HepG2 (cell line): ENCODE measurements at regions of chr12 and their contacts with region 1.

Region 1: DNA sequence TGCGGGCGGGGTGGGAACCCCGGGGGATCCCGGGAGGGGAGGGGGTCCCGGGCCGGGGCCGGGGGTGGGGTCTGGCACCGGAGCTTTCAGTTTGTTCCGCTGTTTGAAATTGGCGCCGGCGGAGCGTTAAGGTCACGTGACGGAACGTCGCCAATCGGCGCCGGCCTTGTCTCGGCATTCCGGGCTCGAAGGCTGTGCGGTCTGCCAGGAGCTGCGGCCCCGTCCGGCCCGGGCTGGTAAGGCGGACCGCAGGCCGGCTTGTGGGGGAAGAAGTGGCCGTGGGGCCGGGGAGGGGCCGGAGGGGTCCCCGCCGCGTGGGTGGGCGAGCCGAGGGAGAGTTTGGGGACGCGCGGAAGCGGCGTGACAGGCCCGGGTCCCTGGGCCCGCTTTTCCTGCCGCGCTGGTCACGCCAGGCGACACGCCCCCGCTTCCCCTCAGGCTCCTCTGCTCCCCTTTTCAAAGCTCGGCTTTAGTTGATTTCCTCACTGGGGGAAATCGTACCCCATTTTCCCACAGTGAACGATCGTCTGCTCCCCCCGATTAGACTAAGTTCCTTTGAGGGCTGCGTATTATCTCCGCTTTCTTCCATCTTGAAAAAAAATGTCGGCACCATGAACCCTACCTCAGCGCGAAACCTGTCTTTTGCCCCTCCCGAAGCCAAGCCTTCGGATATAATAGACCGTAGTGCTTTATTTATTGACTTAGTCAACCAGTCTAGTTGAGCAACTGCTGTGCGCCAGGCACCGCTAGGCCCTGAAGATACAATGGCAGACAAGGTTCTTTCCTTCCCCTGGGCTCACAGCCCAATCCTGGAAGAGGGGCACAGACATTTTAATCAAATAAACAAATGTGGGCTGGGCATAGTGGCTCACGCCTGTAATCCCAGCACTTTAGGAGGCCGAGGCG is at the starts of genes FOXM1 and RHNO1:
- DNase-seq: peak; percentile 78
- ATAC-seq: peak; percentile 93
- H3K4me3 ChIP-seq: peak within 1 kb of the TSS; percentile 74 to 85 (median 77)
- H3K27ac ChIP-seq: peak within 1 kb of the TSS; percentile 84
- H3K4me1 ChIP-seq: peaks cover 38% of the 10 kb centered on the region
- H3K27me3 ChIP-seq: no peaks in the 10 kb centered on the region; a peak in 1 of 5 replicates
- CTCF ChIP-seq: no peak
- EP300 ChIP-seq: no peak
- POLR2A ChIP-seq: peak; percentile 61 to 81; a peak in 3 of 4 replicates
- RAD21 ChIP-seq: peak; percentile 40; the same call in 1 of the 2 replicates
- total RNA-seq, gene FOXM1: 25.9 and 28.6 TPM in 2 replicates
- total RNA-seq, gene RHNO1: 27.2 and 30.4 TPM in 2 replicates

Region 2: DNA sequence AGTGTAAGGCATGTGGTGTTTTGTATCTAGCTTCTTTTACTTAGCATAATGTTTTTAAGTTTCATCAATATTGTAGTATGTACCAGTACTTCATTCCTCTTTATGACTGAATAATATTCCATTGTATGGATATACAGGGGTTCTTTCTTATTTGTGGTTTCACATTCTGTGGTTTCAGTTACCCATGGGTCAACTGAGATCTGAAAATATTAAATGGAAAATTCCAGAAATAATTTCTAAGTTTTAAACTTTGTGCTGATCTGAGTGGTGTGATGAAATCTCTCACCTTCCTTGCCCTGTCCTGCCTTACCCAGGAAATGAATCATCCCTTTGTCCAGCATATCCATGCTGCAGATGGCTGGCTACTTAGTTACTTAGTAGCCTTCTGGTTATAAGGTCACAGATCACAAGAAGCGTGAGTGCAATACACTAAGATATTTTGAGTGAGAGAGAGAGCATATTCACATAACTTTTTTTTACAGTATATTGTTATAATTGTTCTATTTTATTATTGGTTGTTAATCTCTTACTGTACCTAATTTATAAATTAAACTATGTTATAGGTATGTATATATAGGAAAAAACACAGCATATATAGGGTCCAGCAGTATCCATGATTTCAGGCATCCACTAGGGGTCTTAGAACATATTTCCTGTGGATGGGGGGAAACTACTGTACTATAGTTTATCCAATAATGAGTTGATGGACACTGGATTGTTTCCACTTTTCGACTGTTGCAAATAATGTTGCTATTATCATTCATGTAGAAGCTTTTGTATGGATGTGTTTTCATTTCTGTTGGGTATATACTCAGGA is 1116.5 kb before region 1 on chr12:
- CTCF ChIA-PET with region 1: no interaction called
- POLR2A ChIA-PET with region 1: no interaction called
- in situ Hi-C with region 1: no loop called
- intact Hi-C with region 1: no loop called
- DNase-seq: peak; percentile 95
- ATAC-seq: peak; percentile 99
- H3K4me3 ChIP-seq: peak overlapping the region in 1 of 3 experiments; percentile 7; a peak in 1 of 6 replicates
- H3K27ac ChIP-seq: peak overlapping the region; percentile 83
- H3K4me1 ChIP-seq: peaks cover 82% of the 10 kb centered on the region
- H3K27me3 ChIP-seq: no peaks in the 10 kb centered on the region
- CTCF ChIP-seq: no peak
- EP300 ChIP-seq: peak in 1 of 2 experiments; percentile 96; a peak in 2 of 4 replicates
- POLR2A ChIP-seq: no peak
- RAD21 ChIP-seq: no peak

Region 3: DNA sequence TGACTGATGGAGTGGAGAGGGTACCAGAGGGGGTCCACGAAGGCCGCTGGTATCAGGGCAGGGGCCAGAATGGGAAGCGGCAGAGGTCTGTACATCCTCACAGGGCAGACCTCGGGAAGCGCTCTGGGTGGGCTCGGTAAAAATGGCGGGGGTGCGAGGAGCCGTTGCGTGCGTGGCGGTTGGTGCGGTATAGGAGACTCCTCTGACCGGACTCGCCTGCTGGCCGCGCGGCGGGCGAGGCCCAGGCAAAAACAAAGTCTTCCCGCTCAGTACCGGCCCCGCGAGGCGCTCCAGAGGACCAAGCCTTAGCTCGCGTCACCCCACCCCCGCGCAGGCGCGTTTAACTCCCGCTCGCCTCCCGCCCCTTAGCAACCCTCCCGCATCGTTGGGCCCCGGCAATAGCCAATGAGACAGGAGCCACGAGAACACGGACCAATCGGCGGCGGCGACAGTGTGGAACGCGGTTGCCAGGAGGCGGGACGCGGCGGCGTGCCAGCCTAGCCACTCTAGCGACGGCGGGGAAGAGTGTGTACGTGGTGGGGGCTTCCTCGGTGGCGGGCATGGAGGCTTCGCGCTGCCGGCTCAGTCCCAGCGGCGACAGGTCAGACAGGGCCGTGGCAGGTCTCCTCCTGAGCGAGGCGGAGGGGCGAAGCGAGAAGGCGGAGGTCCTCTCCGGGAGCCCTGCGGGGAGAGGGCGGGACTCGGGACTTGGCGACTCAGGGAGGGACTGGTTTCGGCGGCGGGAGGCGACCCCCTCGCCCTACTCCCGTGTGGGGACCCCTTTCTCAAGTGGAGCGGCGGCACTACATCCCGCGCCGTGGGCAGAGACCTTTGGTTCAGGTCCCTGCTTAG is 13.3 kb after region 1 on chr12 and contains the start of gene TULP3:
- CTCF ChIA-PET with region 1: no interaction called
- POLR2A ChIA-PET with region 1: interaction called, 12 read pairs
- in situ Hi-C with region 1: no loop called
- intact Hi-C with region 1: no loop called
- DNase-seq: peak; percentile 95
- ATAC-seq: peak; percentile 97
- H3K4me3 ChIP-seq: peak within 1 kb of the TSS; percentile 81 to 87 (median 82)
- H3K27ac ChIP-seq: peak within 1 kb of the TSS; percentile 78
- H3K4me1 ChIP-seq: peaks cover 61% of the 10 kb centered on the region
- H3K27me3 ChIP-seq: no peaks in the 10 kb centered on the region
- CTCF ChIP-seq: peak; percentile 2; the same call in 1 of the 2 replicates
- EP300 ChIP-seq: no peak
- POLR2A ChIP-seq: peak; percentile 65 to 93
- RAD21 ChIP-seq: no peak
- total RNA-seq, gene TULP3: 11.2 and 11.8 TPM in 2 replicates

Region 4: DNA sequence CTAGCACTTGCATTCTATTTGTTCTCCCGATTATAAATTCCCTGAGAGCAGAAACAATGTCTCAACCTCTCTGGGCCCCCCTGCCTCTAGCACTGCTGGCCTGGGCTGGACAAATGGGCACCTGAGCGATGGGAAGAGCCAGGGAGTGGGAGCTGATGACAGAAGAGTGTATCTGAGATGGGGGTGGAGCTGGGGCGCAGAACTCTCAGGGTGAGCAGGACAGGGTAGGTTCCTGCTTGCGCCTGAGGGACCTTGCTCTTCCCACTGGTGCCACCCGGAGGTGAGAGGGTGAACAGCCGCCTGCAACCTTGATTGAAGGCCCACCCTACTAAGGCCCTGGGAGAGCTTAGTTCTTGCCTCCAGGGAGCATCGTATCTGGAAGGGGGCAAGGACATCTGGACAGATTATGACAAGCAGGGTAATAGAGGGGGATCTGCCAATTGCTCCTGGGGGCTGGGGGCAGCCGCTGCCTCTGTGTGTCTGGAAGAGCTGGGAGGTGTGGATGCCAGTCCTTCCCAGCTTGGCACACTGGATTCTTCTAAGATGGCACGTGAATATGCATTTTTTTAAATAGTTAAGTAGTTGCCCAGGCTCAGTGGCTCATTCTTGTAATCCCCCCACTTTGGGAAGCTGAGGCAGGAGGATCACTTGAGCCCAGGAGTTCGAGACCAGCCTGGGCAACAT is 156.9 kb after region 1 on chr12:
- CTCF ChIA-PET with region 1: no interaction called
- POLR2A ChIA-PET with region 1: no interaction called
- in situ Hi-C with region 1: loop called (anchors 10 kb)
- intact Hi-C with region 1: no loop called
- DNase-seq: peak; percentile 55
- ATAC-seq: peak; percentile 93
- H3K4me3 ChIP-seq: no peak overlapping the region
- H3K27ac ChIP-seq: no peak overlapping the region
- H3K4me1 ChIP-seq: no peaks in the 10 kb centered on the region
- H3K27me3 ChIP-seq: no peaks in the 10 kb centered on the region
- CTCF ChIP-seq: peak; percentile 83
- EP300 ChIP-seq: no peak; a peak in 1 of 4 replicates
- POLR2A ChIP-seq: no peak
- RAD21 ChIP-seq: peak; percentile 61